Testis (tissue), 5 donors: ENCODE measurements at regions of chr1 and their contacts with region 1.

Region 1: GRCh38 chr1:201085916-201086735 is 26.1 kb downstream of the CACNA1S start:
- DNase-seq: peak; percentile 80
- H3K4me3 ChIP-seq: no peak overlapping the region
- H3K27ac ChIP-seq: no peak overlapping the region
- H3K4me1 ChIP-seq: no peaks in the 10 kb centered on the region
- H3K27me3 ChIP-seq: no peaks in the 10 kb centered on the region
- CTCF ChIP-seq: peak; percentile 33 to 62 (median 35)
- POLR2A ChIP-seq: no peak

Region 2: GRCh38 chr1:200877839-200878551 is 208.1 kb before region 1 on chr1:
- intact Hi-C with region 1: no loop called
- DNase-seq: no peak
- H3K4me3 ChIP-seq: no peak overlapping the region
- H3K27ac ChIP-seq: no peak overlapping the region
- H3K4me1 ChIP-seq: no peaks in the 10 kb centered on the region
- H3K27me3 ChIP-seq: no peaks in the 10 kb centered on the region
- CTCF ChIP-seq: no peak
- POLR2A ChIP-seq: no peak

Region 3: GRCh38 chr1:201374364-201374763 is 288.2 kb after region 1 on chr1:
- intact Hi-C with region 1: loop called (anchors 5 kb)
- DNase-seq: no peak
- H3K4me3 ChIP-seq: no peak overlapping the region
- H3K27ac ChIP-seq: no peak overlapping the region
- H3K4me1 ChIP-seq: no peaks in the 10 kb centered on the region
- H3K27me3 ChIP-seq: no peaks in the 10 kb centered on the region
- CTCF ChIP-seq: no peak
- POLR2A ChIP-seq: no peak